Mammary epithelial cell (primary cell): ENCODE measurements at regions of chr21 and their contacts with region 1.

Region 1: GRCh38 chr21:42107881-42108553 is 36.9 kb downstream of the UMODL1 start:
- DNase-seq: peak; percentile 60
- H3K4me3 ChIP-seq: no peak overlapping the region
- H3K27ac ChIP-seq: no peak overlapping the region
- H3K4me1 ChIP-seq: no peaks in the 10 kb centered on the region
- H3K27me3 ChIP-seq: no peaks in the 10 kb centered on the region
- CTCF ChIP-seq: peak; percentile 89 to 96

Region 2: GRCh38 chr21:41283211-41283818 is 824.7 kb before region 1 on chr21:
- CTCF ChIA-PET with region 1: interaction called, 3 read pairs
- dilution Hi-C with region 1: no loop called
- in situ Hi-C with region 1: no loop called
- intact Hi-C with region 1: loop called (anchors 2 kb)
- DNase-seq: peak; percentile 69
- H3K4me3 ChIP-seq: no peak overlapping the region
- H3K27ac ChIP-seq: no peak overlapping the region
- H3K4me1 ChIP-seq: no peaks in the 10 kb centered on the region
- H3K27me3 ChIP-seq: no peaks in the 10 kb centered on the region
- CTCF ChIP-seq: peak; percentile 82 to 83

Region 3: GRCh38 chr21:41879190-41879998 is 228.6 kb before region 1 on chr21 and contains the start of gene PRDM15:
- CTCF ChIA-PET with region 1: no interaction called
- dilution Hi-C with region 1: no loop called
- in situ Hi-C with region 1: no loop called
- intact Hi-C with region 1: loop called (anchors 5 kb)
- DNase-seq: peak; percentile 62
- H3K4me3 ChIP-seq: peak within 1 kb of the TSS; percentile 66 to 85 (median 84)
- H3K27ac ChIP-seq: peak within 1 kb of the TSS; percentile 85
- H3K4me1 ChIP-seq: peaks cover 12% of the 10 kb centered on the region
- H3K27me3 ChIP-seq: no peaks in the 10 kb centered on the region
- CTCF ChIP-seq: no peak
- total RNA-seq, gene PRDM15: 7.2 to 8.1 TPM

Region 4: DNA sequence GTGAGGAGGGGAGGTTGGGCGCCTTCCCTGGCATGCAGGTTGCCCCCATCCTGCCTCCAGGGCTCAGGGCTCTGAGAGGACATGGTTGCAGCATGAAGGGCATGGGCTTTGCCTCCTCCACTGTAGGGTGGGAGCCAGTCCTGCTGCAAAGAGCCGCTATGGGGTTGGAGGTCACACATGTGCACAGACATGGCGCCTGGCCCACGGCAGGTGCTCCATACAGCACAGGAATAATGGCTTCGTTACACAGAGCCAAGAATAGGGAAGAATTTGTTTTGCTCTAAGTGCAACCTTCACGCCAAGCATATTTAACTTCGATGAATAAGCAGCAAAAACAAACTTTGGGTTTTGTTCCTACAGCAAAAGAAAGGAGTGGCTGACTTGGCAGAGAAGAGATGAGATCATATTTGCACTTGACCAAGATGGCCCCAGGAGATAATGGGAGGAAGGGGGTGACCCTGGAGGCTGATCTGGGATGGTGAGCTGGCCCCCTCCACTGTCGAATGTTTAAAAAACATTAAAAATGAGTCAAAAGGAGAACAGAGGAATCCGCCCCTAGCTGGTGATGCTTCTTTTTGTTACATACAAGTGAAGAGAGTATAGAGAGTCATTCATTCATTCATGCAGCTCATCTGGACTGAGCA is 141.9 kb before region 1 on chr21:
- CTCF ChIA-PET with region 1: no interaction called
- dilution Hi-C with region 1: no loop called
- in situ Hi-C with region 1: no loop called
- intact Hi-C with region 1: no loop called
- DNase-seq: no peak
- H3K4me3 ChIP-seq: no peak overlapping the region
- H3K27ac ChIP-seq: no peak overlapping the region
- H3K4me1 ChIP-seq: no peaks in the 10 kb centered on the region
- H3K27me3 ChIP-seq: no peaks in the 10 kb centered on the region
- CTCF ChIP-seq: no peak

Region 5: DNA sequence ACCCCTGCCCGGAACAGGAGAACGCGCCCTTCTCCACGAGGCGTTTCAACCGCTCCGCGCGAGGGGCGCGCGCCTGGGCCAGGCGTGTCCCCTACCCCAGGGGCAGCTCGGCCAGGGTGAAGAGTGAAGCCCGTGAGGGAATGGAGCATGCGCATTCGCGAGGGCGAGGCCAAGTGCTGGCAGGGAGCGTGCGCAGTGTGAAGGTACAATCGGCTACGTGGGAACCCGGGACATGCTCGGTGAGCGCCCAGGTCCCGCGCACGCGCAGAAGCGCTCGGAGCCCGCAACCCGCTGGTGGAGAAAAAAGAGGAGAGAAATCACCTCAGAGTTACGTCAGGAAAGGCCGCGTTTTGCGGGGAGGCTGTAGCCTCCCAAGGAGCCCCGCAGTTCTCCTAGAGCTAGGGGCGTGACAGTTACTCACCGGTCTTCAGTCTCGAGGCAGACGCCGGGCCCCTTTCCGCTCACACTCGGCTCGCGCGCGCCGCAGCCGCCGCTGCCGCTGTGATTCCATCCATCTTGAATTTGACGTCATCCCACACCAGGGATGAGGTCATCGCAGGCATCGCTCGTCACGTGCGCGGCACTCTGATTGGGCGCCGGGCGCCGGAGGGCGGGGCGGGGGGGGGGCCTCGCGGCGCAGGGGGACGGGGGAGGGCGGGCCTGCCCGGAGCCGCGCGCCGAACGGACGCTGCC is 98.0 kb before region 1 on chr21 and contains the start of gene ZBTB21:
- CTCF ChIA-PET with region 1: no interaction called
- dilution Hi-C with region 1: loop called (anchors 5 kb)
- in situ Hi-C with region 1: no loop called
- intact Hi-C with region 1: loop called (anchors 1 kb)
- DNase-seq: peak; percentile 95
- H3K4me3 ChIP-seq: peak within 1 kb of the TSS; percentile 79 to 83 (median 80)
- H3K27ac ChIP-seq: peak within 1 kb of the TSS; percentile 95
- H3K4me1 ChIP-seq: peaks cover 5% of the 10 kb centered on the region
- H3K27me3 ChIP-seq: no peaks in the 10 kb centered on the region
- CTCF ChIP-seq: no peak
- total RNA-seq, gene ZBTB21: 16.3 to 22.4 TPM

Region 6: GRCh38 chr21:42019101-42019605 is 88.9 kb before region 1 on chr21:
- CTCF ChIA-PET with region 1: no interaction called
- dilution Hi-C with region 1: loop called (anchors 5 kb)
- in situ Hi-C with region 1: no loop called
- intact Hi-C with region 1: no loop called
- DNase-seq: peak; percentile 81
- H3K4me3 ChIP-seq: no peak overlapping the region
- H3K27ac ChIP-seq: no peak overlapping the region
- H3K4me1 ChIP-seq: no peaks in the 10 kb centered on the region
- H3K27me3 ChIP-seq: no peaks in the 10 kb centered on the region
- CTCF ChIP-seq: no peak

Region 7: GRCh38 chr21:42073145-42074092 is 34.6 kb before region 1 on chr21:
- CTCF ChIA-PET with region 1: no interaction called
- dilution Hi-C with region 1: loop called (anchors 5 kb)
- in situ Hi-C with region 1: no loop called
- intact Hi-C with region 1: no loop called
- DNase-seq: no peak
- H3K4me3 ChIP-seq: no peak overlapping the region
- H3K27ac ChIP-seq: no peak overlapping the region
- H3K4me1 ChIP-seq: no peaks in the 10 kb centered on the region
- H3K27me3 ChIP-seq: peaks cover 5% of the 10 kb centered on the region
- CTCF ChIP-seq: no peak

Region 8: DNA sequence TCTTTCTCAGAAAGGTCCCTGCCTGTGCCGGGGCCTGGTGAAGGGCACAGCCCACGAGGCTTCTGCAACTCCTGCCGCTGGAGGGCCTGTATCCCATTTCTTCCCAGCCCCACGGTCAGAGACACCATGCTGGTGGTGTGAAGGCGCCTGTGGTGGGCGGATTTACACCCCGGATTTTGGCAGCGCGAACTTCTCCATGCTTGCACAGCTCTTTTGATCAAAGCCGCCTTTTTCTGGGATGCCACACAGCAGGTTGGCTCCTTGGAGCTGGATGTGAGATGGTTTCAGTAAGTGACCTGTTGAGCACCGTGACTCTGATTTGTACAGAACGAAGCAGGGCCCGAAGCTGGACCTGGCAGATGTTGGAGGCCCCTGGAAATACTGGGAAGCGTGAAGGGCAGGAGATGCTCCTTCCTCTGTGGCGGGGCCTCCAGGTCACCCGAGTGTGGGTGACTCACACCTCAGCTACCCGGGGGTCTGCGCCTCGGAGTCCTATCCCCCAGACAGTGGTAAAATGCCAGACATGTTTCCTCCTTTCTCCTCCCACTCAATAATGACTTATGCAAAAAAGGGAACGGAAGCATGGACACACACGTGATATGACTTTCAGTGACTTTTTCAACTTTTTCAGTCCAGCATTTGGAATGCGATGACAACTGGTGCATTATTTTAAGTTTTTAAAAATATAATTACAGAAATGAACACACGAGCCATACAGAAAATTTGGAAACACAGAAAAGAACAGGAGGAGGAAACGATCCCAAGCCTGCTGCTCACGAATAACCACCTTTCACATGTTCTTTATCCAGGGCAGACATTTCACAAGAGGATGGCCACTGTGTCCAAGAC is 27.9 kb before region 1 on chr21:
- CTCF ChIA-PET with region 1: interaction called, 11 read pairs
- dilution Hi-C with region 1: no loop called
- in situ Hi-C with region 1: no loop called
- intact Hi-C with region 1: no loop called
- DNase-seq: no peak
- H3K4me3 ChIP-seq: no peak overlapping the region
- H3K27ac ChIP-seq: no peak overlapping the region
- H3K4me1 ChIP-seq: peaks cover 11% of the 10 kb centered on the region
- H3K27me3 ChIP-seq: no peaks in the 10 kb centered on the region
- CTCF ChIP-seq: no peak